Activated CD4-positive, alpha-beta T cell treated with anti-CD3 and anti-CD28 coated beads for 36 hours (primary cell): ENCODE measurements at regions of chr10 and their contacts with region 1.

Region 1: DNA sequence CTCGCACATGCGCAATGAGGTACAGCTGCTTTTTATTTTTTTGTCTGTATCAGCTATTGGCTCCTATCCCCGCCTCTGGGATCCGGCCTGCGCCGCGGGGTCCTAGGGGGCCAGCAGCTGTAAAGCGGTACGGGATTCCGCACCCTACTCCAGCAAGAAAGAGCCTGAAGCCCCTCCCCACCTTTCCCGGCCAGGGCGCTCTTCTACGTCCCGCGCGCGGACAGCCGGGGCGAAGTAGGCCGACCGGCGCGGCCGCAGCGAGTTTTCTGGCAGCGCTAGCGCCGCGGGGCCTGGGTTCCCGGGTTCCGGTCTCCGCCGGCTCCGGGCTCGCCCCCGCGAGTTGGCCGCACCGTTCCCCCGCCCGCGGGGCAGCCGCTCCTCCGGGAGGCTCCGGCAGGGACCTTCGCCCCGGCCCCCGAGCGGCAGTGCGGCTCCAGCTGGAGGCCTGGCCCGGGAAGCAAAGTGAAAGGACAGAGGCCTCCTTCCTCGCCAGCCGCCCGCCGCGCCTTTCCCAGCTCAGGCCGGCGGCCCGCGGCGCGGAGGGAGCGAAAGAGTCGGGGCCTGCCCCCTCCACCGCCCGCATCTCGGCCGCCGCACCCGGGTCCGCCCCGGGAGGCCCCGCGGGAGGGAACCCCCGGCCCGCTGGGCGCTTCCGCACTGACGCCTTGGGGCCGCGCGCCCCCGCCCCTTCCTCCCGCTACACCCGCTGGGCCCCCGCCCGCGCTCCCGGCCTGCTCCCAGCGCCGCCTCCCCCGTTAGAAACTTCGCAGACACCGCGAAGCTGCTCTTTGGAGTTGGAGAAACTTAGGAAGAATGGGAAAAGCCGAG is 4.7 kb upstream of the SPAG6 start:
- DNase-seq: peak; percentile 72
- ATAC-seq: peak; percentile 48
- H3K4me3 Mint-ChIP-seq: peak overlapping the region; percentile 78
- H3K27ac Mint-ChIP-seq: peak overlapping the region; percentile 89
- H3K4me1 Mint-ChIP-seq: peaks cover 34% of the 10 kb centered on the region
- H3K27me3 Mint-ChIP-seq: peaks cover 58% of the 10 kb centered on the region

Region 2: DNA sequence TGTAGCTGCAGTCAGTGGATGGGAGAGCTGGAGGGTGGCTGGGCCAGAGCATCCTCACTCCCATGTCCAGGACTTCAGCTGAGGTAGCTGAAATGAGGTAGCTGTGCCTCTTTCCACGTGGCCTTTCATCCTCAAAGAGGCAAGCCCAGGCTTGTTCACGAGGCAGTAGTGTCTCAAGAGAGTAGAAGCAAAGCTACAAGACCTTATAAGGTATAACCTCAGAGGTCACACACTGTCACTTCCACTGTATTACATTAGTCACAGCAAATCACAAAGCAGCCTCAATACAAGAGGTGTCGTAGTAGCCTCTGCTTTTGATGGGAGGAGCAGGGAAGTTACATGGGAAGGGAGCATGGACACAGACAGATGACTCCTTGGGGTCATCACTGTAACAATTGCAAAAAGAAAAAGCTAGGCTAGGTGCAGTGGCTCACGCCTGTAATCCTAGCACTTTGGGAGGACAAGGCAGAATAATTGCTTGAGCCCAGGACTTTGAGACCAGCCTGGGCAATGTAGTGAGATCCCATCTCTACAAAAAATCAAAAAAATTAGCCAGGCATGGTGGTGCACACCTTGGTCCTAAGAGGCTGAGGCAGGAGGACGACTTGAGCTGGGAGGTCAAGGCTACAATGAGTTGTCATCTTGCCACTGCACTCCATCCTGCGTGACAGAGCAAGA is 912.6 kb before region 1 on chr10:
- CTCF ChIA-PET with region 1: no interaction called
- POLR2A ChIA-PET with region 1: no interaction called
- intact Hi-C with region 1: no loop called
- DNase-seq: no peak
- ATAC-seq: peak; percentile 68
- H3K4me3 Mint-ChIP-seq: no peak overlapping the region
- H3K27ac Mint-ChIP-seq: no peak overlapping the region
- H3K4me1 Mint-ChIP-seq: no peaks in the 10 kb centered on the region
- H3K27me3 Mint-ChIP-seq: peaks cover 1% of the 10 kb centered on the region

Region 3: DNA sequence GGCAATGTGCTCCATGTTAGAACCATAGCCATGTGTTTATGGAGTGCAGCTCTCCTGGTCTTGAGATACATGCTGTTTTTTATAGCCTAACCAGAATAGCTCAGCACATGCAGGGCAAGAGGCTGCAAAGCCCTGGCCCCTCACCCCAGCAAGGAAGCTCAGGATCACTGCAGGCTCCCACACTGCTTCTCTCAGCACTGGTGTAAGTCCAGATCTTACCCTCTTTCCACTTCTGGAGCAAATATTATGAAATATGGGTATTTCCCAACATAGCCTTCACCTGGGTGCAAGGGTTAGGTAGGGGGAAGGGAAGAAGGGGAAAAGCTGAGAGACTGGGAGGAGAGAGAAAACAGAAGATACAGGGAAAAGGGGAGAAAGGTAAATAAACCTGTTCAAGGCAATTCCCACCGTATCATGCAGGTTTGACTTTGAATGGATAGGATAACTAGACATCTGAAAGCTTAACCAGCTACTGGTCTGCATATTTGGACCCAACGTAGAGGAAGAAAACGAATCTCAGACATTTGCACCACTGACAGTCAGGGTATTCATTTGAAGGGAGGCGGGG is 834.8 kb before region 1 on chr10:
- CTCF ChIA-PET with region 1: no interaction called
- POLR2A ChIA-PET with region 1: no interaction called
- intact Hi-C with region 1: no loop called
- DNase-seq: no peak
- ATAC-seq: no peak
- H3K4me3 Mint-ChIP-seq: no peak overlapping the region
- H3K27ac Mint-ChIP-seq: no peak overlapping the region
- H3K4me1 Mint-ChIP-seq: no peaks in the 10 kb centered on the region
- H3K27me3 Mint-ChIP-seq: peaks cover 25% of the 10 kb centered on the region

Region 4: GRCh38 chr10:21516242-21517131 is 824.1 kb before region 1 on chr10:
- CTCF ChIA-PET with region 1: no interaction called
- POLR2A ChIA-PET with region 1: no interaction called
- intact Hi-C with region 1: loop called in 1 of 2 experiments (anchors 5 kb)
- DNase-seq: peak; percentile 75
- ATAC-seq: peak; percentile 71
- H3K4me3 Mint-ChIP-seq: peak overlapping the region; percentile 78
- H3K27ac Mint-ChIP-seq: no peak overlapping the region
- H3K4me1 Mint-ChIP-seq: peaks cover 34% of the 10 kb centered on the region
- H3K27me3 Mint-ChIP-seq: peaks cover 68% of the 10 kb centered on the region

Region 5: GRCh38 chr10:22475651-22476600 is 135.3 kb after region 1 on chr10:
- CTCF ChIA-PET with region 1: interaction called, 3 read pairs
- POLR2A ChIA-PET with region 1: interaction called, 3 read pairs
- intact Hi-C with region 1: loop called (anchors 2 kb)
- DNase-seq: peak; percentile 53
- ATAC-seq: peak; percentile 54
- H3K4me3 Mint-ChIP-seq: peak overlapping the region; percentile 72
- H3K27ac Mint-ChIP-seq: peak overlapping the region; percentile 80
- H3K4me1 Mint-ChIP-seq: peaks cover 13% of the 10 kb centered on the region
- H3K27me3 Mint-ChIP-seq: peaks cover 53% of the 10 kb centered on the region

Region 6: GRCh38 chr10:22655311-22655981 is 314.9 kb after region 1 on chr10:
- CTCF ChIA-PET with region 1: no interaction called
- POLR2A ChIA-PET with region 1: no interaction called
- intact Hi-C with region 1: no loop called
- DNase-seq: peak; percentile 62
- ATAC-seq: peak; percentile 57
- H3K4me3 Mint-ChIP-seq: peak overlapping the region; percentile 63
- H3K27ac Mint-ChIP-seq: peak overlapping the region; percentile 85
- H3K4me1 Mint-ChIP-seq: peaks cover 98% of the 10 kb centered on the region
- H3K27me3 Mint-ChIP-seq: no peaks in the 10 kb centered on the region